Activated CD4-positive, alpha-beta memory T cell treated with anti-CD3 and anti-CD28 coated beads for 36 hours (primary cell): ENCODE measurements at regions of chr19 and their contacts with region 1.

Region 1: GRCh38 chr19:13861732-13862531 is 15.0 kb upstream of the NANOS3 start:
- DNase-seq: peak; percentile 94
- H3K4me3 Mint-ChIP-seq: peak overlapping the region; percentile 97
- H3K27ac Mint-ChIP-seq: peak overlapping the region; percentile 99
- H3K4me1 Mint-ChIP-seq: peaks cover 38% of the 10 kb centered on the region
- H3K27me3 Mint-ChIP-seq: peaks cover 21% of the 10 kb centered on the region

Region 2: DNA sequence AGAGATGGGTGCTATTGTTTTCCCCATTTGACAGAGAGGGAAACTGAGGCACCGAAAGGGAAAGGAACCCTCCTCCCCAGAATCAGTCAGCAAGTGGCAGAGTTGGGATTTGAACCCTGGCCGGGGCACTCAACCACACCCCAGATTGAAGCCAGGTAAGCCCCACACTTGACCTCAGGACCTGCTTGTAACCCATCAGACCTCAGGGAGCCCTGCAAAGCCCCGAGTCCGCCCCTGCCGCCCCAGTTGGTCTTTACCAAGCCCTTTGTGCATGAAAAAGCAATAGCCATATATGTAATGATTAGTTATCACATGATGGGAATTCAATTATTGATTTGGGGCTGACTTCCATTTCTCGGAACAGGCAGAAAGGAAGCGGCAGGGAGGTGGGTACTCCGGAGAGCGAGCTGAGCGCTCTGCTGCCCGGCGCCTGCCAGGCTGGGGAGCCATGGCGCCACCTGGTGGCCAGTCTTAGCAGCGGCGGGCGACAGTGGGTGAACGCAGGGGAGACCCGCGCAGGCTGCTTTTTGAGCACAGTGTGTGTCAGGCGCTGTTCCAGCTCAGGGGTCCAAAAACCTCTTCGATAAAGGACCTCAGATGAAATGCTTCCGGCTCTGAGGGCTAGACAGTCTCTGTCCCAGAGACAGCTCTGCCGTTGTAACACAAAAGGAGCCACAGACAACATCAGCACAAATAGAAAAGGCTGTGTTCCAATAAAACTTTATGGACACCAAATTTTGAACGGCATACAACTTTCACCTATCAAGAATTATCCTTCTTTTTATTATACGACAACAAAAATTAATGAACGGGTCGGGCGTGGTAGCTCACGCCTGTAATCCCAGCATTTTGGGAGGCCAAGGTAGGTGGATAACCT is 272.7 kb before region 1 on chr19:
- CTCF ChIA-PET with region 1: interaction called, 11 read pairs
- POLR2A ChIA-PET with region 1: no interaction called
- intact Hi-C with region 1: no loop called
- DNase-seq: peak; percentile 87
- H3K4me3 Mint-ChIP-seq: no peak overlapping the region
- H3K27ac Mint-ChIP-seq: no peak overlapping the region
- H3K4me1 Mint-ChIP-seq: no peaks in the 10 kb centered on the region
- H3K27me3 Mint-ChIP-seq: peaks cover 8% of the 10 kb centered on the region

Region 3: GRCh38 chr19:13731147-13731964 is 130.6 kb before region 1 on chr19:
- CTCF ChIA-PET with region 1: interaction called, 5 read pairs
- POLR2A ChIA-PET with region 1: no interaction called
- intact Hi-C with region 1: loop called (anchors 5 kb)
- DNase-seq: peak; percentile 96
- H3K4me3 Mint-ChIP-seq: peak overlapping the region; percentile 79
- H3K27ac Mint-ChIP-seq: peak overlapping the region; percentile 96
- H3K4me1 Mint-ChIP-seq: peaks cover 22% of the 10 kb centered on the region
- H3K27me3 Mint-ChIP-seq: no peaks in the 10 kb centered on the region

Region 4: GRCh38 chr19:13784731-13785452 is 77.0 kb before region 1 on chr19:
- CTCF ChIA-PET with region 1: interaction called, 145 read pairs
- POLR2A ChIA-PET with region 1: interaction called, 17 read pairs
- intact Hi-C with region 1: loop called (anchors 1 kb)
- DNase-seq: peak; percentile 86
- H3K4me3 Mint-ChIP-seq: peak overlapping the region; percentile 53
- H3K27ac Mint-ChIP-seq: peak overlapping the region; percentile 19
- H3K4me1 Mint-ChIP-seq: peaks cover 41% of the 10 kb centered on the region
- H3K27me3 Mint-ChIP-seq: no peaks in the 10 kb centered on the region

Region 5: DNA sequence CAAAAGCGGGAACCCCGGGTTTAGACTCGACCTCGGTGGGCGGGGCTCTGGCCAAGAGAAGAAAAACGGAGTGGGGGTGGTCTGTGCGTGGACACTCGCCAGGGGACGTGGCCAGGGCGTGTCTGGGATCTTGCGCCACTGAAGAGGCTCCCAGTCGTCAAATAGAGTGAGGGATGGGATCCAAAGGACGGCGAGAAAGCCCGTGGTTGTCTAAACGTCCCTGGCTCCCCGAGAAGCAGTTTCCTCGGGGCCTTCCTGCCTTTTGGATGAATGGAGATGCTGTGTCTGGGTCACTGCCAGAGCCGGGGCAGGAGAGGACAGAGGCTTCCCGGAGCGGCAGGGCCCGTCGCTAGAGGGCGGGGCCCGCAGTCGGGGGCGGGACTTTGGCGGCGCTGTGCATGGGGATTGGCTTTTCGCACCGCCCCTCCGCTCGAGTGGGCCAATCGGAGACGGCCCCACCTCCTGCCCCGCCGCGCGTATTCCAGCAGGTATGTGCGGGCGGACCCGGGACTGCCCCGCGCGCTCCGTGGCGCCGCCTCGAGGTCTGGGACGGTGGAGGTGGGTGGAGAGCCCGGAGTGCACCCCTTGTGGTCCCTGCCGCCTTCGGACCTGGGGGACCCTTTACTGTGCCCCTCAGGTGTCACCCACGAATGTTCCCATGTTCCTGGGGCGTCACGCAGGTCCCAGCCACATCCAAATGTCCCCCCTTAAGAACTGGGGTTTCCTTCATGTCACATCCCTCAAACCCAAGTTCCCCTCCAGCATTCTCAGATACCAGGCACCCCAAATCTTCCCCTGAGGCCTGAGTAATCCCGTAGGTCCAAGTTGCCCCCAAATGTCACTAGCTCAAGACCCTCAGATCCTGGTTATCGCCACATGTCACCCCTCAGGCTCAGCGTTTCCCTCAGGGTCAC is 28.3 kb before region 1 on chr19:
- CTCF ChIA-PET with region 1: interaction called, 49 read pairs
- POLR2A ChIA-PET with region 1: interaction called, 14 read pairs
- intact Hi-C with region 1: no loop called
- DNase-seq: peak; percentile 97
- H3K4me3 Mint-ChIP-seq: peak overlapping the region; percentile 78
- H3K27ac Mint-ChIP-seq: peak overlapping the region; percentile 90
- H3K4me1 Mint-ChIP-seq: peaks cover 38% of the 10 kb centered on the region
- H3K27me3 Mint-ChIP-seq: no peaks in the 10 kb centered on the region